ENCODE measurements at regions of chr7 and their contacts with region 1.

Region 1: GRCh38 chr7:102272075-102272917 is 14.4 kb upstream of the SH2B2 start:
- DNase-seq: peak; percentile 61 to 84 (median 72)
- ATAC-seq: peak; percentile 68
- H3K4me3 ChIP-seq: no peak overlapping the region
- H3K4me3 Mint-ChIP-seq: no peak overlapping the region
- H3K27ac ChIP-seq: no peak overlapping the region
- H3K27ac Mint-ChIP-seq: no peak overlapping the region
- H3K4me1 ChIP-seq: peaks cover 4% of the 10 kb centered on the region
- H3K4me1 Mint-ChIP-seq: no peaks in the 10 kb centered on the region
- H3K27me3 ChIP-seq: no peaks in the 10 kb centered on the region
- H3K27me3 Mint-ChIP-seq: no peaks in the 10 kb centered on the region
- CTCF ChIP-seq: peak; percentile 94

Region 2: DNA sequence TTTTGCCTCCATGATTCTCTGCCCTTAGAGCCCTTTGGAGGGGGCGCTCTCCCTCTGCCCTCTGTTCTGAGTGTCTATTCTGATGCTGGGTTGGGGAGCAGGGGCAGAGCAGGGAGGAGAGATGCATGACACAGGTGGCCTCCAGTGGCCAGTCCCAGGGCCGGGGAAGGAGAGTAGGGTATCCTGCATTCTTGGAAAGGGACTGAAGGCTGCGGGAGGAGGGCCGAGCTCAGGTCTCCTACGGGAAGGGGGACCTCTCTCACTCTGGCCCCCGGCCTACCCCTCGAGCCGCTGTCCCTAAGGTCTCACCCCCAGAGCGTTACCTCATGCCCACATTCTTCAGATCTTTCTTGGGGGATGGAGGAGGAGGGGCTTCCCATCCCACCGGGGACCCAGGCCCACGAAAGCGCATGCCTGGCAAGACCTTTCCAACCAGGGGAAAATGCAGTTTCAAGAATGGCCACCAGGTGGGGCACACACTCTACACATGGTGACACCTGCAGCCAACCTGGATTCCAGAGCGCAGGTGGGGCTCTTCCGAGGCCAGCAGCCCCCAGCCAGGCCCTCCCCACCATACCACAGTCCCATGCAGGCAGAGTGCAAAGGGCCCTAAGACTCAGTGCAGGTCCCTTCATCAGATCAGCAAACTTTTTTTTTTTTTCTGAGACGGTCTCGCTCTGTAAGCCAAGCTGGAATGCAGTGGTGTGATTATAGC is 729.6 kb before region 1 on chr7:
- CTCF ChIA-PET with region 1: no interaction called
- POLR2A ChIA-PET with region 1: no interaction called
- intact Hi-C with region 1: loop called (anchors 1 kb)
- DNase-seq: peak; percentile 61 to 81 (median 72)
- ATAC-seq: peak; percentile 49
- H3K4me3 ChIP-seq: no peak overlapping the region
- H3K4me3 Mint-ChIP-seq: no peak overlapping the region
- H3K27ac ChIP-seq: no peak overlapping the region
- H3K27ac Mint-ChIP-seq: no peak overlapping the region
- H3K4me1 ChIP-seq: peaks cover 4% of the 10 kb centered on the region
- H3K4me1 Mint-ChIP-seq: no peaks in the 10 kb centered on the region
- H3K27me3 ChIP-seq: peaks cover 0 to 3% of the 10 kb centered on the region in 2 experiments
- H3K27me3 Mint-ChIP-seq: peaks cover 4% of the 10 kb centered on the region
- CTCF ChIP-seq: peak; percentile 88

Region 3: DNA sequence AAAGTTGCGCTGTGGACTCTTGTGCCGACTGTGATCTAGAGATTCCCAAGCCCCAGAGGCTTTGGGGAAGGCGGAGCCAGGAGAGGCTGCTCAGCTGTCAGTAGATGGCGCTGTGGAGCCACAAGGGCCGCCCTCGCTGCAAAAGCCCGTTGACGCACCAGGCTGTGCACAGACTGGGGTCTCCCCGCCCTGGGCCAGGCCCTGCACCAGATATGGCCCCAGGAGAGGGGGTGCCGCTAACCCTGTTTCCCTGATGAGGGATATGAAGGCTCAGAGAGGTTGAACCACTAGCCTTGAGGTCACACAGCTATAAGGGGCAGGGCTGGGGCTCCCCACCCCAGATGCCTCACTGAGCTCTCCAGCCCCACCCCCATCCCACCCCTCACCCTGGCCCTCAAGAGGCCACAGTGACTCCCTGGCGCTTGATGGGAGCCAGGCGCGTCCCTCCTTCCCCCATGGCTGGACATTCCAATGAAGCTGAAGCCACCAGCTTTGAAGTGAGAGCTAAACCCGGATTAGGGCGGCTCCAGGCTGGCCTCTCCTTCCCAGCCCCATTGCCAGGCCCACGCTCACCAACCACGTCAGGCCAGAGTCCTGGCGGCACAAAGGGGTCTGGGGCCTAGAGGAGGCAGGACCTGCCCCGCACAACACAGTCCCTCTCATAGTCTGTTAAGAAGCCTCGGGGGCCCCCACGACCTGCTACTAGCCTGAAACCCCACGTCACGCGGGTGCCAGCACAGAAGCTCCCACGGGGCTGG is 669.6 kb before region 1 on chr7:
- CTCF ChIA-PET with region 1: no interaction called
- POLR2A ChIA-PET with region 1: no interaction called
- intact Hi-C with region 1: loop called in 1 of 2 experiments (anchors 1 kb)
- DNase-seq: peak; percentile 48 to 81 (median 58)
- ATAC-seq: peak; percentile 69
- H3K4me3 ChIP-seq: no peak overlapping the region
- H3K4me3 Mint-ChIP-seq: no peak overlapping the region
- H3K27ac ChIP-seq: no peak overlapping the region
- H3K27ac Mint-ChIP-seq: no peak overlapping the region
- H3K4me1 ChIP-seq: peaks cover 5% of the 10 kb centered on the region
- H3K4me1 Mint-ChIP-seq: no peaks in the 10 kb centered on the region
- H3K27me3 ChIP-seq: no peaks in the 10 kb centered on the region
- H3K27me3 Mint-ChIP-seq: peaks cover 4% of the 10 kb centered on the region
- CTCF ChIP-seq: peak; percentile 75

Region 4: DNA sequence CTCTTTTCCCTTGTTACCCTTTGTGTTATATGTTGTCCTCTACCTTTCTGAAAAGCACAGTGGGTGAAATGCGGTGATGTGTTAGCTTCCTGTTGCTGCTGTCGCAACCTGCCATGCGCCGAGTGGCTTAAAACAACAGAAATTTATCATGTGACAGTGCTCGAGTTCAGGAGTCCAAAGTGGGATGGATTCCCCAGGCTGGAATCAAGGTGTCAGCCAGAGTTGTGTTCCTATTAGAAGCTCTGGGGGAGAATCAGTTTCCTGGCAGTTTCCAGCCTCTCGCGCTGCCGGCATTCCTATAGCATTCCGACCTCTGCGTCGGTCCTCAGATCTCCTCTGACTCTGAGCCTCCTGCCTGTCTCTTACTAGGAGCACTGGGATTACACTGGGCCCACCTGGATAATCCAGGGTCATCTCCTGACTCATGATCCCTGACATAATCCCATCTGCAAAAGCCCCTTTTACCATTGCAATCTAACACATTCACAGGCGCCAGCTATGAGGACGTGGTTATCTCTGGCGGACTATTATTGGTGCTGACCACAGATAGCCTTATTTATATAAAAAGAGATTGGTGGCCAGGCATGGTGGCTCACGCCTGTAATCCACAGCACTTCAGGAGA is 247.4 kb before region 1 on chr7:
- CTCF ChIA-PET with region 1: no interaction called
- POLR2A ChIA-PET with region 1: no interaction called
- intact Hi-C with region 1: no loop called
- DNase-seq: no peak
- ATAC-seq: no peak
- H3K4me3 ChIP-seq: no peak overlapping the region
- H3K4me3 Mint-ChIP-seq: no peak overlapping the region
- H3K27ac ChIP-seq: no peak overlapping the region
- H3K27ac Mint-ChIP-seq: peak overlapping the region; percentile 68
- H3K4me1 ChIP-seq: no peaks in the 10 kb centered on the region
- H3K4me1 Mint-ChIP-seq: peaks cover 13% of the 10 kb centered on the region
- H3K27me3 ChIP-seq: no peaks in the 10 kb centered on the region
- H3K27me3 Mint-ChIP-seq: no peaks in the 10 kb centered on the region
- CTCF ChIP-seq: no peak

Measured in CD4-positive, alpha-beta T cell (primary cell).